ENCODE measurements at regions of chr5 and their contacts with region 1.

Region 1: GRCh38 chr5:80308526-80308925 is 11.3 kb upstream of the SPZ1 start:
- DNase-seq: no peak
- H3K4me3 ChIP-seq: no peak overlapping the region
- H3K27me3 ChIP-seq: no peaks in the 10 kb centered on the region
- CTCF ChIP-seq: no peak

Region 2: DNA sequence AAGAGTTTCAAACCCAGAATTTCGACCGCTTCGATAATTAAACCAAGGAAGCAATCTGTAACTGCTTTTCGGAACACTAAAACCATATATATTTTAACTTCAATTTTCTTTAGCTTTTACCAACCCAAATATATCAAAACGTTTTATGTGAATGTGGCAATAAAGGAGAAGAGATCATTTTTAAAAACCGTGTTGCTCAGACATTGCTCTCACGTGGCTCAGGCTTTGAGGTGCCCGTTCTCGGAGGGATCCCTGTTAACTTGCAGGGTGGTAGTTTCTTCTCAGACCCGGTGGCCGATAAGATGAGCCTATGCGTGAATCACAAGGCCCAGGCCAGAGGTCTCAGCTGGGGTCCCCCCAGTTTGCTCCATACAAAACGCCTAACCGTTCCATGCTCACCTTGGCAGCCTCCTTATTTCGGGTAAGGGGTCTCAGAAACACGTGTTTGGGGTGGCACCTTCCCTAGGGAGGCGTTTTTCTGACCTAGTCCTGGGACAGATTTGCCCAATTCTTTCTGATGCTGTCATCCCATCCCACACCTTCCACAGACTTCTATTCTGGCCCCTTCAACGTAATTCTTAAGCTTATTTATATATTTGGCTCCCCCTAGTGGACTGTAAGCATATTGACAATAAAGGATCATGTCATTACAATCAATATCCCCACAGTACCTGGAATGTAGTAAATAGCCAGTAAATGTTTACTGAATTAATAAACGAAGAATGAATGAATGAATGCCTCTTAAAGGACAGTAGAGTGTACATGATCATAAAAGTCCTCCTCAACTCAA is 225.2 kb before region 1 on chr5:
- CTCF ChIA-PET with region 1: interaction called, 172 read pairs
- POLR2A ChIA-PET with region 1: no interaction called
- DNase-seq: no peak
- H3K4me3 ChIP-seq: peak overlapping the region; percentile 27
- H3K27me3 ChIP-seq: no peaks in the 10 kb centered on the region
- CTCF ChIP-seq: peak; percentile 60

Region 3: DNA sequence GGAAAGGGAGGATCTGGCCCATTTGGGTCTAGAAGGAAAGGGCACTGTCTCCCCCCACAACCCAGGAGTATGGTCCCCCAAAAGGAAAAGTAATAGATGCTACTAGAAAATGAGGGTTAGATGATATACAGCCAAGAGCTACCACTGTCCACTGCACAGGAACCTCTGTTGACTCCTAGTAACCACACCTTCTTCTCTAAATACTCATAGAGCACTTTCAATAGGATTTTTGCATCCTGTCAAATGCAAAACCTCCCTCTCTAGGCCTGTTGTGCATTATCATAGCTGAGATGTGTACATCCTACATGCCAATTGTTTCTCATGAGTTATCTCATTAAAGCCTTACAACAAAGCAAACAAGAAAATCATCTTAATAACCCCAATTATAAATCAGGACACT is 206.5 kb before region 1 on chr5:
- CTCF ChIA-PET with region 1: interaction called, 23 read pairs
- POLR2A ChIA-PET with region 1: no interaction called
- DNase-seq: no peak
- H3K4me3 ChIP-seq: no peak overlapping the region
- H3K27me3 ChIP-seq: peaks cover 1% of the 10 kb centered on the region
- CTCF ChIP-seq: no peak

Region 4: GRCh38 chr5:80204808-80205614 is 103.5 kb before region 1 on chr5:
- CTCF ChIA-PET with region 1: no interaction called
- POLR2A ChIA-PET with region 1: no interaction called
- DNase-seq: no peak
- H3K4me3 ChIP-seq: no peak overlapping the region
- H3K27me3 ChIP-seq: no peaks in the 10 kb centered on the region
- CTCF ChIP-seq: no peak

Region 5: DNA sequence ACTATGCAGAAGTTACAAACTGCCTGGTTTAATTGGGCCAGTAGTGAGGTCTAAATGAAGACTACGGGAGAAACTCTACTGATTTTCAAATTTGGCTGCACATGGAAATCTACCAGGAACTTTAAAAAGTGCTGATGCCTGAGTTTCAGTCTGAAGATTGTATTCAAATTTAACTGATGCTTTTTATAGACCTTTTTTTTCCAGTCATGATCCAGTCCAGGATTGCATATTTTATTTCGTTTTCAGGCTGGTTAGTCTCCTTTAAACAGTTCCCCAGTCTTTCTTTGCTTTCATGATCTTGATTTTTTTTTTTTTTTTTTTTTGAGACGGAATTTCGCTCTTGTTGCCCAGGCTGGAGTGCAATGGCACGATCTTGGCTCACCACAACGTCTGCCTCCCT is 12.4 kb before region 1 on chr5:
- CTCF ChIA-PET with region 1: interaction called, 10 read pairs
- POLR2A ChIA-PET with region 1: no interaction called
- DNase-seq: no peak
- H3K4me3 ChIP-seq: no peak overlapping the region
- H3K27me3 ChIP-seq: no peaks in the 10 kb centered on the region
- CTCF ChIP-seq: no peak

Measured in BJ (cell line).